GM10248 (cell line): ENCODE measurements at regions of chr17 and their contacts with region 1.

Region 1: GRCh38 chr17:57243171-57243948 is 13.0 kb upstream of the MSI2 start:
- DNase-seq: peak; percentile 82
- CTCF ChIP-seq: peak; percentile 100

Region 2: GRCh38 chr17:57213180-57213825 is 30.1 kb before region 1 on chr17:
- CTCF ChIA-PET with region 1: interaction called, 10 read pairs
- POLR2A ChIA-PET with region 1: no interaction called
- DNase-seq: no peak
- CTCF ChIP-seq: no peak

Region 3: DNA sequence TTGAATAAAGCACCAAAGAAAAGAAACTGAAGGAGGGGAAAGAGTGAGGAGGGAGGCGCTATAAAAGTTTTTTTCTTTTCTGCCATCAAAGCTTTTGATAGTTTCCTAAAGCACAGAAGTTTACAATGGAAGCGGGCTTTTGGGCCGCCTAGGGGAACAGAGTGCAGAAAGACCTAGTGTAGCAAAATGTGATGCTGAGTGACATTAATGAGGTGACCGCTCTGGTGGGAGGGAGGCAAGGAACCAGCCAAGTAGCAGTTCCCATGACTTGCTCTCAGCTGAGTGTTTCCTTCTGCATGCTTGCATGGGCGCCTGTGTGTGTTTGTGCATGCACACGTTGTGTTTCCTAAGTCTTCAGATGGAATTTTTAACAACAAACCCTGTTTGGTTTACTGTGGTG is 28.5 kb after region 1 on chr17:
- CTCF ChIA-PET with region 1: interaction called, 30 read pairs
- POLR2A ChIA-PET with region 1: no interaction called
- DNase-seq: no peak
- CTCF ChIP-seq: no peak

Region 4: GRCh38 chr17:57406131-57406980 is 163.0 kb after region 1 on chr17:
- CTCF ChIA-PET with region 1: interaction called, 19 read pairs
- POLR2A ChIA-PET with region 1: no interaction called
- DNase-seq: no peak
- CTCF ChIP-seq: no peak

Region 5: GRCh38 chr17:57447990-57448758 is 204.8 kb after region 1 on chr17:
- CTCF ChIA-PET with region 1: interaction called, 10 read pairs
- POLR2A ChIA-PET with region 1: no interaction called
- DNase-seq: no peak
- CTCF ChIP-seq: no peak

Region 6: GRCh38 chr17:57671667-57672632 is 428.6 kb after region 1 on chr17:
- CTCF ChIA-PET with region 1: interaction called, 45 read pairs
- POLR2A ChIA-PET with region 1: no interaction called
- DNase-seq: peak; percentile 87
- CTCF ChIP-seq: peak; percentile 94

Region 7: DNA sequence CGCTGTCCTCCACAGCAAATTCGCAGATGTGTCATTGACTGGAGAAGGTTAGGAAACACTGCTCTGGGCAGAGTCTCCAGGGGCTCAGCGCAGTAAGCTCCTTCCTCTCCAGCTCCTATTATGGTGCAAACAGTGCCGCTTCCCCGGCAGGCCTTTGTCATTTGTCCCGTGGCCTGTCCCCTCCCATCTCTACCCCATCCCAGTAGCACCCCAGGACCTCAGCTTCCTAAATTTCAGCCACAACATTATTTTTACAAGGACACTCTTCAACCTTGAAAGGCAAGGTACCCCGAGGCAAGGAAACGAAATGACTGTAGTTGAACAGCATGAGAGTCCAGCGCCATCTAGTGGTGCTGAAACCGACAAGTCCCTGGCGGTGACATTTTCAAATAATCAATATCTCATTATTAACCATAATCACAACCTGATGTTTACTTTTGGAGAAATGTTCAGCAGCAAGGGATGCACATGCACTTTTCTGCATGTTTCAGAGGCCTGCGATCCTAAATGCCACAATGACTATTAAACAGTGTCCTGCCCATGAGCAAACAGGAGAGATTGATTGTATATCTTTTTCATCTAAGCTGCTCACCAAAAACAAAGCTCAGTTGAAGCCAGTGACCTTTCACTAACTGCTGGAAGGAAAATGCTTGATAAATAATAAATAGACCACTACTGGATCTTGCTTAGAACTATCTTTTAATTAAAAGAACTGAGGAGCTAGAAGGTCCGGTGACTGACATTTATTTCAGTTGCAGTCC is 590.0 kb after region 1 on chr17:
- CTCF ChIA-PET with region 1: interaction called, 10 read pairs
- POLR2A ChIA-PET with region 1: no interaction called
- DNase-seq: peak; percentile 69
- CTCF ChIP-seq: peak; percentile 90